ENCODE measurements at regions of chr14 and their contacts with region 1.

Region 1: GRCh38 chr14:91477388-91477787 is 32.7 kb downstream of the PPP4R3A start:
- DNase-seq: no peak
- ATAC-seq: no peak
- H3K4me3 ChIP-seq: no peak overlapping the region
- H3K4me3 Mint-ChIP-seq: peak overlapping the region; percentile 9
- H3K27ac ChIP-seq: peak overlapping the region in 1 of 2 donors; percentile 43
- H3K27ac Mint-ChIP-seq: peak overlapping the region; percentile 64
- H3K4me1 ChIP-seq: peaks cover 14 to 16% of the 10 kb centered on the region in 2 donors
- H3K4me1 Mint-ChIP-seq: peaks cover 38% of the 10 kb centered on the region
- H3K27me3 ChIP-seq: no peaks in the 10 kb centered on the region
- H3K27me3 Mint-ChIP-seq: no peaks in the 10 kb centered on the region
- CTCF ChIP-seq: no peak

Region 2: DNA sequence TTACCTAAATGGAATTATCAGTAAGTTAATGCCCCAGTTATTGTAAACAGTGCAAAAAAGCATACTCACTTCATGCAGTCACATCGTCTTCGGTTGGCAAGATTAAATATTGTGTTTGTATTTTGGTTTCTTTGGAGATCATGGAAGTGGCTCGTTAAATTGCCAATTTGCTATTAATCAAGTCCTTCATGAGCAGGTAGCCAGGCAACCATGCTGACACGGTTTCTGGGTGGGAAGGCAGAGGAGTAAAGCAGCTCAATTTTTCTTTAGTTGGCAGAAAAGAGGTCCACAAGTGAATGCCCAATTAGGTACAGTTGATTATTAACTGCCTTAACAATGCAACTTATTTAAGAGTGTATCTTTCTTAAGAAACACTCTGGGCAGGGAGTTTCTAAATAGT is 11.2 kb before region 1 on chr14:
- CTCF ChIA-PET with region 1: interaction called, 3 read pairs
- POLR2A ChIA-PET with region 1: interaction called, 3 read pairs
- intact Hi-C with region 1: loop called (anchors 2 kb)
- DNase-seq: no peak
- ATAC-seq: no peak
- H3K4me3 ChIP-seq: no peak overlapping the region
- H3K4me3 Mint-ChIP-seq: no peak overlapping the region
- H3K27ac ChIP-seq: no peak overlapping the region
- H3K27ac Mint-ChIP-seq: no peak overlapping the region
- H3K4me1 ChIP-seq: no peaks in the 10 kb centered on the region
- H3K4me1 Mint-ChIP-seq: no peaks in the 10 kb centered on the region
- H3K27me3 ChIP-seq: no peaks in the 10 kb centered on the region
- H3K27me3 Mint-ChIP-seq: no peaks in the 10 kb centered on the region
- CTCF ChIP-seq: no peak